ENCODE measurements at regions of chr4 and their contacts with region 1.

Region 1: GRCh38 chr4:7939377-7940108 is at the start of gene AFAP1:
- DNase-seq: peak; percentile 92
- ATAC-seq: peak; percentile 94 to 96
- total RNA-seq, gene AFAP1: 19.6 to 33.3 TPM

Region 2: GRCh38 chr4:6761649-6762602 is 1177.6 kb before region 1 on chr4:
- intact Hi-C with region 1: no loop called
- DNase-seq: no peak
- ATAC-seq: no peak

Region 3: DNA sequence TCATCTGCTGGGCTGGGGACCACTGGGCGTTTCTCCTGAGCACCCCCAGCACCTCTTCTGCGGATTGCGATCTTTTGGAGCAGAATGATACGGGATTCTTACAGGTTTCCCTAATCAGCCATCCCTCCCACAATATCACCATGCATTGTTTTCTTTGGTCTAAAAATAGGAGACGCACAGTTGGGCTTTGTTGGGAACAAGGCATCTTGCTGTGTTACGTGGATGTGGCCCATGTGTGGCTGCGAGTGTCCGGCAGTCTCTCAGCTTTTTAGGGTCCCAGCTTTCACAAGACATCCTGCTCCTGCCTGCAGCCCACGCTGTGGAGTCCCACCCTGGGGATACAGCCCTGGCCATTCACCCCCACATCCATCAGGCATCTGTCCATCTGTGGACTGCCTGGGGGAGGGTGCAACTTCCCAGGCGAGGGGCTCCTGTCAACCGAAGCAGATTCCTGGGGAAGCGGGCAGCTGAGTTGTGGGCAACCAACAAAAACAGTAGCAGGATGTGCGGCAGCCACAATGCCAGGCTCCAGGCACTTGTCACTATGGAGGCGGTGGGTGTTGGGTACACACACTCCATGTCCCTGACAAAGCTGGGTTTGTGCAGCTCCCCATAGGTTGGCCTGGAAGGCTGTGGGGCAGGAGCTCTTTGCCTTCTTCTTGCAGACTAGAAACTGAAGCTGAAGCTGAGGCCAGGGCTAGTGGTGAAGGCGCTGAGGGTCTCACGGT is 319.3 kb before region 1 on chr4:
- intact Hi-C with region 1: no loop called
- DNase-seq: no peak
- ATAC-seq: no peak

Region 4: GRCh38 chr4:7861440-7861881 is 78.1 kb before region 1 on chr4:
- intact Hi-C with region 1: loop called in 1 of 2 experiments (anchors 10 kb)
- DNase-seq: peak; percentile 57
- ATAC-seq: peak; percentile 39 to 42

Region 5: DNA sequence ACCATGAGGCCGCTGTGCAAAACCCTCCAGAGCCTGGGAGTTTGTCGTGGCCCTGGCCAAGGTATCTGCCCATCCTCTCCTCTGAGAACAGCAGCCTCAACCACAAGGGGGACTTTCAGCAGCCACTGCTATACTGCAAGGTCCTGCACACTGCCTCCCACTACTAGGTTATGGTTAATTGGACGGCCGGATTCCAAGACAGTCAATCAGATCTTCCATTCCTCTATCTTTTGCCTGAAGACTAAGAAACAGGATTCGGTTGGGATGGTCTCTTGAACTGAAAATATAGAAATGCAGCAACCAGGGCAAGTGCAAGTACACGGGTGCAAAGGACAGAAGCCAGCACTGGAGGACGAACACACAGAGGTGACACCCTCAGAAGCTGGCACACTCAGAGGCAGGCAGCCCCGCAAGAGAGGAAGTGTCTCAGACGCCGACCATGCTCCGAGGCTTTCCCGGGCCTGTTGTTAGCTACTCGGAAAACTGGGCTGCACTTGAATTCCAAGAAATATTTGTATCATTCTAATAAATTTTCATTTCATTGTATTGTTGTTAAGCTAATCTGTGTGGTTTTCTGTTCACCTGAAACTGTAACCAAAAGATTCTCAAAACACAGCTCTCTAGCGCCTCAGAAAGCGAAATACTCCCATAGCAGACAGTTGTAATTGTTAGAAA is 63.2 kb before region 1 on chr4:
- intact Hi-C with region 1: loop called in 1 of 2 experiments (anchors 10 kb)
- DNase-seq: peak; percentile 56
- ATAC-seq: peak; percentile 42 to 64

Region 6: DNA sequence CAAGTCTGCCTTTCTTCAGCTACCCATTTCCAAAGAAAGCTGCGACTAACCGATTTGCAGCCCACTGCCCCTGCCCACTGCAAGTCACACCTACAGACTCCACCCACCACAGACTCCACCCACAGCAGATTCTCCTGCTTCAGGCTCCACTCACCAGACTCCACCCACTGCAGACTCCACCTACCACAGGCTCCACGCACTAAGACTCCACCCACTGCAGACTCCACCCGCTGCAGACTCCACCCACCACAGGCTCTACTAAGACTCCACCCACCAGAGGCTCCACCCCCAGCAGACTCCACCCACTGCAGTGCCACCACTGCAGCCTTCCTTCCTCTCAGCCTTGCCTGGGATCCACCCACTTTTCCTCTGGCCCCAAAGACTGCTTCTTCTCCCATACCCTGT is 177.7 kb after region 1 on chr4:
- intact Hi-C with region 1: no loop called
- DNase-seq: peak; percentile 47
- ATAC-seq: peak; percentile 72 to 84

Measured in left cardiac atrium (tissue), 4 donors.